Breast epithelium (tissue), 4 donors: ENCODE measurements at regions of chr6 and their contacts with region 1.

Region 1: GRCh38 chr6:2111162-2111677 is 134.2 kb downstream of the GMDS start:
- DNase-seq: no peak
- H3K4me3 ChIP-seq: peak overlapping the region in 1 of 3 donors; percentile 27
- H3K27ac ChIP-seq: peak overlapping the region in 1 of 2 donors; percentile 20
- H3K4me1 ChIP-seq: no peaks in the 10 kb centered on the region
- H3K27me3 ChIP-seq: no peaks in the 10 kb centered on the region
- CTCF ChIP-seq: no peak
- POLR2A ChIP-seq: no peak

Region 2: GRCh38 chr6:1604158-1605030 is 506.8 kb before region 1 on chr6:
- intact Hi-C with region 1: loop called (anchors 5 kb)
- DNase-seq: no peak
- H3K4me3 ChIP-seq: peak overlapping the region; percentile 43 to 67 (median 50)
- H3K27ac ChIP-seq: peak overlapping the region in 1 of 2 donors; percentile 29
- H3K4me1 ChIP-seq: peaks cover 0 to 7% of the 10 kb centered on the region in 2 donors
- H3K27me3 ChIP-seq: peaks cover 0 to 44% of the 10 kb centered on the region in 2 donors
- CTCF ChIP-seq: peak; percentile 55 to 95 (median 59)
- POLR2A ChIP-seq: no peak

Region 3: DNA sequence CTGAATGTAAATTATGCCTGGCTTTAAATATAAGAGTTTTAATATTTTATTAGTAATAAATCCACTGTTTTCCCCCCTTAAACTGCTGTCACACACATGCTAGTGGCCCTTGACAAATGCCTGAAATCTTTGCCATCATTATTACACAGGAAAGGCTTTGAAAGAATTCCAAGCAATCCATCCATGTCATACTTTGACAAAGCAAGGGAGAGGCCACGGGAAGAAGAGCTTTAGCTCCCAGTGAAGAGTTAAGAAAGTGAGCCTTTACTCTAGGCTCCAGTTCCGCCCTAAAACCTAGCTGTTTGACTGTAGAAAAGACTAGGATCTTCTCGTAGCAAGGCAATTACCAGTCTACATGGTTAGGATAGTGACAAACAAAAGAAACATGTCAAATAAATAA is 13.8 kb before region 1 on chr6:
- intact Hi-C with region 1: no loop called
- DNase-seq: no peak
- H3K4me3 ChIP-seq: no peak overlapping the region
- H3K27ac ChIP-seq: no peak overlapping the region
- H3K4me1 ChIP-seq: no peaks in the 10 kb centered on the region
- H3K27me3 ChIP-seq: no peaks in the 10 kb centered on the region
- CTCF ChIP-seq: no peak
- POLR2A ChIP-seq: no peak

Region 4: DNA sequence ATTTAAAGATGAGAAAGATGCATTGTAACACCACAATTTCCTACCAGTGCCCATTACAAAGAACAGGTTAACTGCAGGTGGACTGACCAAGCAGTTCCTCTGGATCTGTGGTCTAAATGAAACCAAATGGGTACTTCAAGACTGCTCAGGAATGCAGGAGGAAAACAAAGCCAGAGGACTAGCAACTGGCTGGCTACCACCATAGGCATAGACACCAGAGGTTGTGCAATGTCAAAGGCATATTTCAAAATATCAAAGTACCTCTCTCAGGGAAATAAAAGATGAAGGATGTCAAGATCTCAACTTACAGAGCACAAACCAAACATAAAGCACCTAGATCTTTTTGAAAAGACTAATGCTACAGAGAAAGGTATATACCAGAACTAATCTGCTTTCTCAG is 68.7 kb after region 1 on chr6:
- intact Hi-C with region 1: loop called (anchors 10 kb)
- DNase-seq: no peak
- H3K4me3 ChIP-seq: no peak overlapping the region
- H3K27ac ChIP-seq: no peak overlapping the region
- H3K4me1 ChIP-seq: no peaks in the 10 kb centered on the region
- H3K27me3 ChIP-seq: no peaks in the 10 kb centered on the region
- CTCF ChIP-seq: no peak
- POLR2A ChIP-seq: no peak

Region 5: GRCh38 chr6:2999618-3000557 is 888.7 kb after region 1 on chr6 and contains the start of gene NQO2:
- intact Hi-C with region 1: loop called (anchors 10 kb)
- DNase-seq: peak; percentile 87
- H3K4me3 ChIP-seq: peak within 1 kb of the TSS; percentile 76 to 99 (median 88)
- H3K27ac ChIP-seq: peak within 1 kb of the TSS; percentile 88 to 95
- H3K4me1 ChIP-seq: no peaks in the 10 kb centered on the region
- H3K27me3 ChIP-seq: no peaks in the 10 kb centered on the region
- CTCF ChIP-seq: peak in 1 of 3 donors; percentile 21
- POLR2A ChIP-seq: peak; percentile 77
- total RNA-seq, gene NQO2: 23.6 to 64.6 (median 24.9) TPM